ENCODE measurements at regions of chr2 and their contacts with region 1.

Region 1: GRCh38 chr2:22748909-22749308 is 636.1 kb upstream of the KLHL29 start:
- DNase-seq: no peak
- ATAC-seq: no peak
- H3K4me3 ChIP-seq: no peak overlapping the region
- H3K27ac ChIP-seq: no peak overlapping the region
- H3K4me1 ChIP-seq: no peaks in the 10 kb centered on the region
- H3K27me3 ChIP-seq: no peaks in the 10 kb centered on the region
- CTCF ChIP-seq: no peak

Region 2: GRCh38 chr2:23009545-23010149 is 260.7 kb after region 1 on chr2:
- intact Hi-C with region 1: loop called in 1 of 2 experiments (anchors 5 kb)
- DNase-seq: peak; percentile 43 to 61
- ATAC-seq: peak in 3 of 4 donors; percentile 25 to 58 (median 53)
- H3K4me3 ChIP-seq: no peak overlapping the region
- H3K27ac ChIP-seq: no peak overlapping the region
- H3K4me1 ChIP-seq: no peaks in the 10 kb centered on the region
- H3K27me3 ChIP-seq: no peaks in the 10 kb centered on the region
- CTCF ChIP-seq: no peak